IMR-90 (cell line): ENCODE measurements at regions of chr3 and their contacts with region 1.

Region 1: GRCh38 chr3:39288300-39288808 is 8.5 kb upstream of the CX3CR1 start:
- DNase-seq: peak; percentile 68
- ATAC-seq: peak; percentile 93
- H3K4me3 ChIP-seq: no peak overlapping the region
- H3K27ac ChIP-seq: no peak overlapping the region
- H3K4me1 ChIP-seq: no peaks in the 10 kb centered on the region
- H3K27me3 ChIP-seq: no peaks in the 10 kb centered on the region
- CTCF ChIP-seq: peak; percentile 95
- POLR2A ChIP-seq: peak; percentile 47; the same call in 1 of the 2 replicates
- RAD21 ChIP-seq: peak; percentile 99

Region 2: GRCh38 chr3:39101022-39101689 is 187.2 kb before region 1 on chr3:
- CTCF ChIA-PET with region 1: interaction called, 10 read pairs
- POLR2A ChIA-PET with region 1: no interaction called
- dilution Hi-C with region 1: no loop called
- in situ Hi-C with region 1: no loop called
- intact Hi-C with region 1: loop called (anchors 1 kb)
- DNase-seq: peak; percentile 26
- ATAC-seq: peak; percentile 72
- H3K4me3 ChIP-seq: no peak overlapping the region
- H3K27ac ChIP-seq: no peak overlapping the region
- H3K4me1 ChIP-seq: peaks cover 4% of the 10 kb centered on the region; the same call in 1 of the 2 replicates
- H3K27me3 ChIP-seq: no peaks in the 10 kb centered on the region
- CTCF ChIP-seq: peak; percentile 62
- POLR2A ChIP-seq: no peak
- RAD21 ChIP-seq: peak; percentile 58

Region 3: DNA sequence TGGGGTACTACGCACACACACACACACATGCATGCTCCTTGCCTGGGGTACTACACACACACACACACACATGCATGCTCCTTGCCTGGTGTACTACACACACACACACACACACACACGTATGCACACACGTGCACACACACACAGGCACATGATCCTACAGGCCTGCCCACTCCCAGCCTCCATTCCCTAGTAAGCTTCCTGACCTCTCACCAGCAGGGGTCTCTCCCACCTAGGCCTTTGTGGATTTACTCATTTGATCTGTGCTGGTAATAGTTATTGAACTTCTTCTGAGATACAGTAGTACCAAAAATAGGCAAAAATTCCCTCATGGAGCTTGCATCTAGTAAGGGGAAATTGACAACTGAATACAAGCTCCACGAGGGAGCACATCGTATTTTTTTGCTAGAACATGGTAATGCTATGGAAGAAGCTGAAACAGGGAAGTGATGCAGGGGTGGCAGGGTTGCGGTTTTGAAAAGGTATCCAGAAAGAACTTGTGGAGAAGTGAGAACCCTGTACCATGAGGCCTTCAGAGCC is 161.8 kb before region 1 on chr3:
- CTCF ChIA-PET with region 1: interaction called, 41 read pairs
- POLR2A ChIA-PET with region 1: no interaction called
- dilution Hi-C with region 1: no loop called
- in situ Hi-C with region 1: loop called (anchors 5 kb)
- intact Hi-C with region 1: loop called (anchors 1 kb)
- DNase-seq: peak; percentile 65
- ATAC-seq: peak; percentile 78
- H3K4me3 ChIP-seq: no peak overlapping the region
- H3K27ac ChIP-seq: no peak overlapping the region
- H3K4me1 ChIP-seq: peaks cover 5% of the 10 kb centered on the region
- H3K27me3 ChIP-seq: no peaks in the 10 kb centered on the region
- CTCF ChIP-seq: peak; percentile 65
- POLR2A ChIP-seq: no peak
- RAD21 ChIP-seq: peak; percentile 70

Region 4: DNA sequence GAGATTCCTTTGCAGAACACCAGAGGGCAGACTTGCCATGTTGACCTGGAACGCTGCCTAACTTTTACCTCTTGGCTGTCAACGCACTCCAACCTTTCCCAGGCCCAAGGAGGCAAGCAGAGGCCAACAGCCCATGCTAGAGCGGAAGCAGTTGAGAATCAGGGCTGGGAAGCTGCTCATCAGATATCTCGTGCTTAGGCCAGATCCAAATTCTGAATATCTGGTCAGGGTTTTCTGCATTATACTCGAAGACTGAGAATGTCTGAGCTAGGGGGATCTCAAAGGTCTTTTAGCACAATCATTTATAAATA is 98.4 kb before region 1 on chr3:
- CTCF ChIA-PET with region 1: interaction called, 13 read pairs
- POLR2A ChIA-PET with region 1: no interaction called
- dilution Hi-C with region 1: no loop called
- in situ Hi-C with region 1: loop called (anchors 5 kb)
- intact Hi-C with region 1: loop called (anchors 1 kb)
- DNase-seq: peak; percentile 64
- ATAC-seq: peak; percentile 74; the same call in 1 of the 2 replicates
- H3K4me3 ChIP-seq: no peak overlapping the region
- H3K27ac ChIP-seq: no peak overlapping the region
- H3K4me1 ChIP-seq: peaks cover 9% of the 10 kb centered on the region
- H3K27me3 ChIP-seq: no peaks in the 10 kb centered on the region
- CTCF ChIP-seq: peak; percentile 81
- POLR2A ChIP-seq: no peak
- RAD21 ChIP-seq: peak; percentile 76

Region 5: GRCh38 chr3:39208463-39209055 is 79.8 kb before region 1 on chr3:
- CTCF ChIA-PET with region 1: no interaction called
- POLR2A ChIA-PET with region 1: no interaction called
- dilution Hi-C with region 1: no loop called
- in situ Hi-C with region 1: no loop called
- intact Hi-C with region 1: loop called (anchors 1 kb)
- DNase-seq: peak; percentile 56
- ATAC-seq: peak; percentile 85
- H3K4me3 ChIP-seq: no peak overlapping the region
- H3K27ac ChIP-seq: no peak overlapping the region
- H3K4me1 ChIP-seq: no peaks in the 10 kb centered on the region
- H3K27me3 ChIP-seq: peaks cover 39% of the 10 kb centered on the region
- CTCF ChIP-seq: peak; percentile 60
- POLR2A ChIP-seq: no peak
- RAD21 ChIP-seq: peak; percentile 50

Region 6: DNA sequence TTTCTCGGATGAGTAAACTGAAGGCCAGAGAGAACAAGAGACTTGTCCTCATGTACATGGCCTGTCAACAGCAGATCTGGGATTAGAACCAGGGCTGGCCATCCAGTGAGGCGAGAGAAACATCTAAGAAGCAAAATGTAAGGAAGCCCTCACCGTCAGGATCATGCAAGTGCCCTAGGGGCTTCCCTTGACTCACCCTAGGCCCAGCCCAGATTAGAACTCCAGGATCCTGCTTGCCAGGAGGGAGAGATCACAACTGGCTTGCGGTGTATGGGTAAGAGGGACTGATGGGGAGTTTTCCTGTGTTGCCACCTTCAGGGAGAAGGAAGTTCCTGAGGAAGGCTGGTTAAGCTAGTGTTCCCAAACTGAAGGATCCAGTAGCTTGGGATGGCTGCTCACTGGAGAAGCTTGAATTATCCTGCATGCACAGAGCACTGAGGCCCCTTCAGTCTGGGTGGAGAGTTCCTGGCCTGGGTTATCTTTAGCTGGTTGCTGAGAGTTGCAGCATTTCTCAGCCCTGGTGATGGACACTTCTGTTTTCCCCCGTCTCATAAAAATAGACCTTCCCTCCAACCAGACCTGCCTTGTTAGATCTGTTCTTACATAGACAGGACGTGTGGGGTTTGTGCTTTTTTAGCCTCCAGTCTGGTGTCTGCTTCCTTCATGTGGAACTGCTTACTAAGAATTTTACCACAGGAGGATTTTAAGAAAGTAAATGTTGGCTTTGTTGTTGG is 67.8 kb before region 1 on chr3:
- CTCF ChIA-PET with region 1: no interaction called
- POLR2A ChIA-PET with region 1: no interaction called
- dilution Hi-C with region 1: no loop called
- in situ Hi-C with region 1: no loop called
- intact Hi-C with region 1: no loop called
- DNase-seq: no peak
- ATAC-seq: no peak
- H3K4me3 ChIP-seq: no peak overlapping the region
- H3K27ac ChIP-seq: no peak overlapping the region
- H3K4me1 ChIP-seq: no peaks in the 10 kb centered on the region
- H3K27me3 ChIP-seq: peaks cover 23% of the 10 kb centered on the region
- CTCF ChIP-seq: no peak
- POLR2A ChIP-seq: no peak
- RAD21 ChIP-seq: no peak